ENCODE measurements at regions of chr5 and their contacts with region 1.

Region 1: GRCh38 chr5:112707187-112708102 is 30.2 kb upstream of the APC start:
- DNase-seq: peak; percentile 95 to 99 (median 98)
- H3K4me3 ChIP-seq: peak overlapping the region; percentile 80 to 86
- H3K4me3 Mint-ChIP-seq: peak overlapping the region; percentile 91 to 96 (median 95)
- H3K27ac ChIP-seq: peak overlapping the region; percentile 86
- H3K27ac Mint-ChIP-seq: peak overlapping the region; percentile 89 to 97 (median 93)
- H3K4me1 ChIP-seq: peaks cover 52% of the 10 kb centered on the region
- H3K4me1 Mint-ChIP-seq: peaks cover 41 to 61% (median 48%) of the 10 kb centered on the region in 4 donors
- H3K27me3 ChIP-seq: no peaks in the 10 kb centered on the region
- H3K27me3 Mint-ChIP-seq: no peaks in the 10 kb centered on the region

Region 2: GRCh38 chr5:111603446-111603827 is 1104.0 kb before region 1 on chr5:
- CTCF ChIA-PET with region 1: no interaction called
- POLR2A ChIA-PET with region 1: no interaction called
- intact Hi-C with region 1: no loop called
- DNase-seq: no peak
- H3K4me3 ChIP-seq: no peak overlapping the region
- H3K4me3 Mint-ChIP-seq: no peak overlapping the region
- H3K27ac ChIP-seq: no peak overlapping the region
- H3K27ac Mint-ChIP-seq: no peak overlapping the region
- H3K4me1 ChIP-seq: no peaks in the 10 kb centered on the region
- H3K4me1 Mint-ChIP-seq: no peaks in the 10 kb centered on the region
- H3K27me3 ChIP-seq: no peaks in the 10 kb centered on the region
- H3K27me3 Mint-ChIP-seq: peaks cover 1 to 3% of the 10 kb centered on the region in 2 donors

Region 3: DNA sequence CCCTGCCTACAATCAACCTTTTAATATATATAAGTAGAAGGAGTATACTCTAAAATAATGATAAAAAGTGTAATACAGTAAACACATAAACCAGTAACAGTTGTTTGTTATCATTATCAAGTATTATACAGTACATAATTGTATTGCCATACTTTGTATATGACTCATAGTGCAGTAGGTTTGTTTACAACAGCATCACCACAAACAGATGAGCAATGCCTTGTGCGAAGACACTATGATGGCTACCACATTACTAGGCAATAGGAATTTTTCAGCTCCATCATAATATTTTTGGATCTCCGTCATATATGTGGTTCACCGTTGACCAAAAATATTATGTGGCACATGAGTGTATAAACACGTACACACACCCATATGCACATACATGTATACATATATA is 39.4 kb before region 1 on chr5:
- CTCF ChIA-PET with region 1: no interaction called
- POLR2A ChIA-PET with region 1: no interaction called
- intact Hi-C with region 1: no loop called
- DNase-seq: no peak
- H3K4me3 ChIP-seq: no peak overlapping the region
- H3K4me3 Mint-ChIP-seq: no peak overlapping the region
- H3K27ac ChIP-seq: no peak overlapping the region
- H3K27ac Mint-ChIP-seq: no peak overlapping the region
- H3K4me1 ChIP-seq: no peaks in the 10 kb centered on the region
- H3K4me1 Mint-ChIP-seq: no peaks in the 10 kb centered on the region
- H3K27me3 ChIP-seq: peaks cover 5% of the 10 kb centered on the region
- H3K27me3 Mint-ChIP-seq: peaks cover 2 to 4% of the 10 kb centered on the region in 2 donors

Region 4: GRCh38 chr5:112717506-112718082 is 10.1 kb after region 1 on chr5:
- CTCF ChIA-PET with region 1: interaction called, 10 read pairs
- POLR2A ChIA-PET with region 1: interaction called, 4 read pairs
- intact Hi-C with region 1: no loop called
- DNase-seq: no peak
- H3K4me3 ChIP-seq: no peak overlapping the region
- H3K4me3 Mint-ChIP-seq: peak overlapping the region in 3 of 8 donors; percentile 7 to 64 (median 43)
- H3K27ac ChIP-seq: no peak overlapping the region
- H3K27ac Mint-ChIP-seq: peak overlapping the region in 1 of 7 donors; percentile 68
- H3K4me1 ChIP-seq: peaks cover 33% of the 10 kb centered on the region
- H3K4me1 Mint-ChIP-seq: peaks cover 46 to 79% (median 54%) of the 10 kb centered on the region in 4 donors
- H3K27me3 ChIP-seq: no peaks in the 10 kb centered on the region
- H3K27me3 Mint-ChIP-seq: no peaks in the 10 kb centered on the region

Region 5: GRCh38 chr5:112737463-112738190 is 30.2 kb after region 1 on chr5 and contains the start of gene APC:
- CTCF ChIA-PET with region 1: interaction called, 3 read pairs
- POLR2A ChIA-PET with region 1: interaction called, 11 read pairs
- intact Hi-C with region 1: loop called (anchors 2 kb)
- DNase-seq: peak; percentile 72 to 89 (median 78)
- H3K4me3 ChIP-seq: peak within 1 kb of the TSS; percentile 47 to 65
- H3K4me3 Mint-ChIP-seq: peak within 1 kb of the TSS; percentile 92 to 99 (median 96)
- H3K27ac ChIP-seq: peak within 1 kb of the TSS; percentile 17
- H3K27ac Mint-ChIP-seq: peak within 1 kb of the TSS; percentile 70 to 96 (median 93)
- H3K4me1 ChIP-seq: peaks cover 12% of the 10 kb centered on the region
- H3K4me1 Mint-ChIP-seq: peaks cover 18 to 28% (median 22%) of the 10 kb centered on the region in 4 donors
- H3K27me3 ChIP-seq: no peaks in the 10 kb centered on the region
- H3K27me3 Mint-ChIP-seq: no peaks in the 10 kb centered on the region
- total RNA-seq, gene APC: 40.5 to 44.5 TPM

Region 6: DNA sequence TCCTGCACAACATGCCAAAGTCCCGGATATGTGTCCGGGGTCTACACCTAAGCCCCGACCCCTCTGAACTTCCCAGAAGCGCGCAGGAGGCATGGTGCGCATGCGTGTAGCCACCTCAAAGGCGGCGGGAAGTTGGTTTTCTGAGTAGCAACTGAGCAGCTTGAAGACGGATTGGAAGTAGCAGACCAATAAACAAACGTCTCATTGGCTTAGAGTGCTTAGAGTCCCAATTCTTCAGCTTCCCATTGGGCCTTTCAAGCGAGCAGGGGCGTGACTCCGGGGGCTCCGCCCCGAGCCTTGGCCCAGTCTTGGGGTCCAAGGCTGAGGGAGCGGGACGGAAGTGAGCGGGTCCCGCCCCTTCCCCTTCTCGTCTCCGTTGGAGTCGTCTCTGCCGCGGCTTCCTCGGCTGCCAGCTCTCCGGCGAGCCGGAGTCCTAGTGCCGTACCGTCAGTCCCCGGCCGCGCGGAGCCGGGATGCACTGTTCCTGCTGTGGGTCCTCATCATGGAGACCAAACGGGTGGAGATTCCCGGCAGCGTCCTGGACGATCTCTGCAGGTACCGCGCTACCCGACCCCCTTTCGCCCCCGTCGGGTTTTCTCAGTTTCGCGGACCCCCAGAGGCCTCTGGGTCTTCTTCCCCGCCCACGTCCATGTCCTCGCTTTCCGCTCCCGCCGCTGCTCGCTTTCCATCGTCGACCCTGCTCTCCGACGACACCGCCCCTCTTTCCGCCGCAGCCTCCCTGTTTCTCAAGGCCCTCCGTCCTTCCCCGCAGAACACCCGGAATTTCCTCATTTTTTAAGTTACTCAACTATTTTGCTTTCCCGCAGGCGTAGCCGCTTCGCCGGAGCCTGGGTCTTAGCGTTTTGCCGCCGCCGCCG is 269.2 kb after region 1 on chr5 and contains the start of gene DCP2:
- CTCF ChIA-PET with region 1: no interaction called
- POLR2A ChIA-PET with region 1: interaction called, 9 read pairs
- intact Hi-C with region 1: loop called (anchors 2 kb)
- DNase-seq: peak; percentile 95 to 97 (median 97)
- H3K4me3 ChIP-seq: peak within 1 kb of the TSS; percentile 77 to 79
- H3K4me3 Mint-ChIP-seq: peak within 1 kb of the TSS; percentile 96 to 100 (median 99)
- H3K27ac ChIP-seq: peak within 1 kb of the TSS; percentile 85
- H3K27ac Mint-ChIP-seq: peak within 1 kb of the TSS; percentile 94 to 98 (median 97)
- H3K4me1 ChIP-seq: peaks cover 45% of the 10 kb centered on the region
- H3K4me1 Mint-ChIP-seq: peaks cover 31 to 63% (median 43%) of the 10 kb centered on the region in 4 donors
- H3K27me3 ChIP-seq: no peaks in the 10 kb centered on the region
- H3K27me3 Mint-ChIP-seq: peaks cover 0 to 4% of the 10 kb centered on the region in 2 donors
- total RNA-seq, gene DCP2: 116 to 123 TPM

Measured in CD4-positive, alpha-beta memory T cell (primary cell).